ENCODE measurements at regions of chr18 and their contacts with region 1.

Region 1: DNA sequence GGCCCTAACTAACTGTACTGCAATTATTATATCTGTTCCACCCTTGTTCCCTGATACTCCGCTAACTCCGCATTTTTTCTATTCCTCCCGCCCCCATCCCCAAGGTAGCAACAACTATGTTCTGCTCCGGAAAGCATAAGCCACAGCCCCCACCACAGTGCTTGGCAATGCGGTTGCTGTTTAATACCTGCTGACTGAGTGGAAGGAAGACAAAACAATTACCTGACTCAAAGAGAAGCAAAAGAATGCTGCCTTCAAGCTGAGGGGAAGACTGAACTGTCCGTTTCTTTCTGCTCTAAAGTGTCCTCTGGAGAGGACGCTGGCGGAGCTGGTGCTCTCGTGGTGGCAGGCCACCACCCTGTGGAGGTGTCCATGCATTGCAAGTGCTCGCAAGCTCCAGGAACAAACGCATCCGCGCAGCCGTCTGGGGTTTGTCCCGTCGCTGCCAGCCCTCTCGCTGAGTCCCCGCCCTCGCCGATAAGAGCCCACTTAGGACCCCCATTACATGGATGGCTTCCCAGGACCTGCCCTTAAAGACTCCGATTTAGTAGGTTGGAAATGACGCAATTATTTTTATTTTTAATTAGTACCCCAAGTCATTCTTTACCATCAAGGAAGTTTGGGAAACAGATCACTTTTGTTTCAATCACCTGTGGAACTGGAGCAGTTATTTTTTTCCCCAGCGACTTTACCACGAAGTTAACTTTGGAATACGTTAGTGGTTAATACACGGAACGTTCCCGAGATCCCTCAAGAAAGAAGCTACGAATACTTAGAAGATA is 1.6 kb upstream of the MYL12A start:
- DNase-seq: peak; percentile 86
- ATAC-seq: peak; percentile 55
- H3K4me3 ChIP-seq: peak overlapping the region; percentile 91 to 99 (median 96)
- H3K4me3 Mint-ChIP-seq: peak overlapping the region; percentile 91
- H3K27ac ChIP-seq: peak overlapping the region; percentile 89 to 94
- H3K27ac Mint-ChIP-seq: peak overlapping the region; percentile 97
- H3K4me1 ChIP-seq: peaks cover 28 to 37% of the 10 kb centered on the region in 2 donors
- H3K4me1 Mint-ChIP-seq: peaks cover 37% of the 10 kb centered on the region
- H3K27me3 ChIP-seq: no peaks in the 10 kb centered on the region
- H3K27me3 Mint-ChIP-seq: no peaks in the 10 kb centered on the region
- CTCF ChIP-seq: peak; percentile 86

Region 2: DNA sequence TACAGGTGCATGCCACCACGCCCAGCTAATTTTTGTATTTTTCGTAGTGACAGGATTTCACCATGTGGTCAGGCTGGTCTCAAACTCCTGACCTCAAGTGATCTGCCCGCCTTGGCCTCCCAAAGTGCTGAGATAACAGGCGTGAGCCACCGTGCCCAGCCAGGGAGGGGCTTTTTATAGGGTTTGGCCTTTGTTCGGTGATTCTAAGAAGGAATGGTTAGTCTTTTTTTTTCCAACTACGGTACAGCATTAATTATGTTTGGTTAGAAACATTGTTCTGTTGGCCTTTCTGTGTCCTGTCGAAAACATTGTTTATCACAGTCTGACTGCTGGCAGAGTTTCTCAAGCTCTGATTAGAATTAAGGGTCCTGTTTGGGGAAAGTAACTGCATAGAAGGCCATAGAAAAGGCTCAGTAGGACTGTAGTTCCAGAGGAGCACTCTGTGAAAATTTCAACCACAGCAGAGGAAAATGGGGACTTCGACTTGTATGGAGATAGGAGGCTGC is 609.9 kb before region 1 on chr18:
- CTCF ChIA-PET with region 1: no interaction called
- POLR2A ChIA-PET with region 1: no interaction called
- intact Hi-C with region 1: loop called (anchors 5 kb)
- DNase-seq: no peak
- ATAC-seq: peak; percentile 11
- H3K4me3 ChIP-seq: peak overlapping the region; percentile 21 to 71 (median 29)
- H3K4me3 Mint-ChIP-seq: peak overlapping the region; percentile 85
- H3K27ac ChIP-seq: peak overlapping the region; percentile 96 to 99
- H3K27ac Mint-ChIP-seq: peak overlapping the region; percentile 99
- H3K4me1 ChIP-seq: peaks cover 67 to 79% of the 10 kb centered on the region in 2 donors
- H3K4me1 Mint-ChIP-seq: peaks cover 84% of the 10 kb centered on the region
- H3K27me3 ChIP-seq: no peaks in the 10 kb centered on the region
- H3K27me3 Mint-ChIP-seq: no peaks in the 10 kb centered on the region
- CTCF ChIP-seq: no peak

Region 3: DNA sequence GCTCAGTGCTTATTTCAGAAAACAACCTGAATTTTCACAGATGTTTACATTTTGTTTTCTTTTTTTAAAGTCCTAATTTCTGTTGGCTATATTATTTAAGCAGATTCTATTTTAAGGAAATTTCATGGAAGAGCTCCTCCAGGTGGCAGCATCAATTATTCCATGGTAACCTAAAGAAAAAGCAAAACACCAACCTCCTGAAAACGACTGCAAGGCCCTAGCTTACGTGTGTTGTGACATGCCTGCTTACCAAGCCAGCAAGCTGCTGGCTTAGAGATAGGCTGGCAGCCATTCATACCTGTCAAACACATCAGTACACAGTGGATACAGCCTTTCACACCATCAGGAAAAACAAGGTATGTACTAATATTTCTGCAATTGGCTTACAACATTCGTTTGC is 298.0 kb before region 1 on chr18:
- CTCF ChIA-PET with region 1: interaction called, 15 read pairs
- POLR2A ChIA-PET with region 1: no interaction called
- intact Hi-C with region 1: no loop called
- DNase-seq: no peak
- ATAC-seq: no peak
- H3K4me3 ChIP-seq: no peak overlapping the region
- H3K4me3 Mint-ChIP-seq: no peak overlapping the region
- H3K27ac ChIP-seq: no peak overlapping the region
- H3K27ac Mint-ChIP-seq: no peak overlapping the region
- H3K4me1 ChIP-seq: no peaks in the 10 kb centered on the region
- H3K4me1 Mint-ChIP-seq: no peaks in the 10 kb centered on the region
- H3K27me3 ChIP-seq: no peaks in the 10 kb centered on the region
- H3K27me3 Mint-ChIP-seq: no peaks in the 10 kb centered on the region
- CTCF ChIP-seq: no peak

Region 4: DNA sequence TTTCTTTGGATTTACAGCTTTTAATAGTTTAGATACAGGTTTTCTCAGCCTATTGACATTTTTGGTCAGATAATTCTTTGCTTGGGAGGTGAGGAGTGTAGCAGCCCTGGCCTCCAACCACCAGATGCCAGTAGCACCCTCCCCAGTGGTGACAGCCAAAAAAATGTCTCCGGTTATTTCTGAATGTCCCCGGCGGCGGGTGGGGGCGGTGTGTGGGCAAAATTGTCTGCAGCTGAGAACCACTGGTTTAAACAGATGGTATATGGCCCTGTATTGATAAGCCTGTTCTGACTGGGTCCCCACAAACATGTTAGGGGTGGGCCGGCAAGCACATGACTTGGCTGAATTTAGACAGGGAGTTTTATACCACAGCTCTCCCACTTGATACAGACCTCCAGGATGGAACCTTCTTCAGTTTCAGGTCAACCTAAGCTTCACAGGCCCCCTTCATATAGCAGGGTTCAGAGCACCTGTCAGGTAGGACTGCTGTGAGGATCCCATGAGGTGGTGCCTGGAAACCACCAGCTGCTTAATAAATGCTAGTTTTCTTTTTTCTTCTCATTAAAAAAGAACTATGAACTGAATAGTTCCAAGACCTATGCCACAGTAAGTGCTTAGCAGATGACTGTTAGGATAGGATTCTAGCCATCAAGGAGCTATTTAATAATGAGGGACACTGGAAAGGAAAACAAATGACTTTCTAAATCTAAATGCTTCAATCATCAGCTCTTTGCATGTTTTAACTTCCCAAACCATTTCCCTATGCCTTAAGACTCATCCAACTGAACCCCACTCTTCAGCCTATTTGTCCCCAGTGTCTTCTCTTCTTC is 251.2 kb before region 1 on chr18:
- CTCF ChIA-PET with region 1: interaction called, 155 read pairs
- POLR2A ChIA-PET with region 1: interaction called, 16 read pairs
- intact Hi-C with region 1: loop called (anchors 1 kb)
- DNase-seq: peak; percentile 81
- ATAC-seq: peak; percentile 95
- H3K4me3 ChIP-seq: peak overlapping the region in 3 of 5 experiments; percentile 12 to 38 (median 21)
- H3K4me3 Mint-ChIP-seq: peak overlapping the region; percentile 50
- H3K27ac ChIP-seq: peak overlapping the region in 1 of 2 donors; percentile 4
- H3K27ac Mint-ChIP-seq: peak overlapping the region; percentile 29
- H3K4me1 ChIP-seq: peaks cover 9 to 14% of the 10 kb centered on the region in 2 donors
- H3K4me1 Mint-ChIP-seq: peaks cover 35% of the 10 kb centered on the region
- H3K27me3 ChIP-seq: no peaks in the 10 kb centered on the region
- H3K27me3 Mint-ChIP-seq: no peaks in the 10 kb centered on the region
- CTCF ChIP-seq: peak; percentile 68

Region 5: DNA sequence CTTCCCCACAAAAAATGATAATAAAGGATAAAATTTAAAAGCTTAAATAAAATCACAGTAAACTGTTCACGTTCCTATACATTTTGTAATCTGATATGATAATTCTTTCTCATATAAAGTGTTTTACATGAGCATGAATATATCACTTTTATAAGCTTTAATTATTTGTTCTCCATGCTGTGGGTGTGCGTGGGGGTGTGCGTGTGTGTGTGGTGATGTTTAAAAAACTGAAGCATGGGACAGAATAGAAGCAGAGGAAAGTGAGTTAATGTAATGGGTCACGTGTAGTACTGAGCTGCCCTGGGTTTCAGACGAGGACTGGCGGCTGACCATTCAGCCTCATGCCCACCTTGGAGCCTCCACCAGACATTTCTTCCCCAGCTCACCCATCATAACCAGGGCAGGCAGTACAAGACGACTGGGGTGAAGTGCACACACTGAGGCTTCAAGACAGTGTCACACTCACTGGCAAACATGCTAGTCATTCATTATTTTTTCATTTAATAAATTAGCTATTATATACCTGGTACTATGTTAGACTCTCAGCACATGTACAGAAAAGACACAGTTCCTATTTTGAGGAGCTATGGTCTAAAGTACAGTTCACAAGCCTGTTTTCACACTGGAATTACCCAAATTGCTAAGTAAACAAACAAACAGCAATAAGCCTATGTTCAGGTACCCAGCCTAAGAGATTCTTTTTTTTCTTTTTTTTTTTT is 135.9 kb before region 1 on chr18:
- CTCF ChIA-PET with region 1: no interaction called
- POLR2A ChIA-PET with region 1: no interaction called
- intact Hi-C with region 1: no loop called
- DNase-seq: no peak
- ATAC-seq: no peak
- H3K4me3 ChIP-seq: no peak overlapping the region
- H3K4me3 Mint-ChIP-seq: no peak overlapping the region
- H3K27ac ChIP-seq: no peak overlapping the region
- H3K27ac Mint-ChIP-seq: no peak overlapping the region
- H3K4me1 ChIP-seq: no peaks in the 10 kb centered on the region
- H3K4me1 Mint-ChIP-seq: no peaks in the 10 kb centered on the region
- H3K27me3 ChIP-seq: no peaks in the 10 kb centered on the region
- H3K27me3 Mint-ChIP-seq: no peaks in the 10 kb centered on the region
- CTCF ChIP-seq: no peak

Region 6: GRCh38 chr18:3151399-3152264 is 94.4 kb before region 1 on chr18:
- CTCF ChIA-PET with region 1: interaction called, 73 read pairs
- POLR2A ChIA-PET with region 1: interaction called, 7 read pairs
- intact Hi-C with region 1: loop called (anchors 1 kb)
- DNase-seq: peak; percentile 50
- ATAC-seq: peak; percentile 33
- H3K4me3 ChIP-seq: no peak overlapping the region
- H3K4me3 Mint-ChIP-seq: no peak overlapping the region
- H3K27ac ChIP-seq: no peak overlapping the region
- H3K27ac Mint-ChIP-seq: no peak overlapping the region
- H3K4me1 ChIP-seq: no peaks in the 10 kb centered on the region
- H3K4me1 Mint-ChIP-seq: peaks cover 7% of the 10 kb centered on the region
- H3K27me3 ChIP-seq: no peaks in the 10 kb centered on the region
- H3K27me3 Mint-ChIP-seq: no peaks in the 10 kb centered on the region
- CTCF ChIP-seq: peak; percentile 95

Region 7: DNA sequence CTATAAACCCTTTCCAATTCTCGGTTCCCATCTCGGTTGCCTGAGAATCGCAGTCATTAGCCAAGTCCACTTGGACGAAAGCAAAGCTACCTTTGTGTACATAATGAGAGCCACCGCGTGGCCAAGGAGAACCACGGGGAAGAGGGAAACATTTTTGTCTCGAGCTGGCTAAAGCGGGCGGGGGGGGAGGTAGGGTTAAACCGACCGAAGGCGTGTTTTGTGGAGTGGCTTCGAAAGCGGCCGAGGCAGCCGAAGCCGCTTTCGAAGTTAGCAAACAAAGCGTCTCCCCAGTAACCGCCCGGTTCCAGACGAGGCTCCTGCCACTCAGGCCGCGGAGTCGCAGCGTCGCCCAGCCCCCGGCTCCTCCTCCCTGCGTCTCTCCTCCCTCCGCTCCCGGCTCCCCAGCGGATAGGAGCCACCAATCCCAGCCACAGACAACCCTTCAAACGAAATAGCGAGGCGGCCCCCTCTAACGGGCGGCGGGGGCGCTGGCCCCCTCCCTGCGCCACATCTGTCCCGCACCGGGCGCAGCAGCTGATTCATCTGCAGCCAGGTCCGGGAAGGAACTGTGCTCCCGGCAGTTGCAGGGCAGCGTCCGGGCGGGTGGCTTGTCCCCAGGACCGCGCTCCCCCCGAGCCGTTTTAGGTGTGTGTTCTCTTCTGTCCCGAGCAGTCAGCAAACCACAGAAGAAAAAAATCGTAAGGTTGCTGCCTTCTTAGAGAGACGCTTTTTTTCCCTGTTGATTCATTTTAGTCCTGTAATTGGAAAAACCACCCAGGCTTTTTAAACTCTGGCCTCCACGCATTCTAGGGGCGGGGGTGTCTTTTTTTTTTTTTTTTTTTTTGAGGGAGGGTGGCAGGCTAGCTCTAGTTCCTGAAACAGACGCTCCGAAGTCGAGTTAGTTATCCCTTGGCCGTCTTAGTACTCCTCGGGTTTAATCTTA is 202.1 kb after region 1 on chr18:
- CTCF ChIA-PET with region 1: interaction called, 3 read pairs
- POLR2A ChIA-PET with region 1: interaction called, 8 read pairs
- intact Hi-C with region 1: loop called (anchors 1 kb)
- DNase-seq: peak; percentile 94
- ATAC-seq: peak; percentile 47
- H3K4me3 ChIP-seq: peak overlapping the region; percentile 75 to 98 (median 92)
- H3K4me3 Mint-ChIP-seq: peak overlapping the region; percentile 99
- H3K27ac ChIP-seq: peak overlapping the region; percentile 99 to 100
- H3K27ac Mint-ChIP-seq: peak overlapping the region; percentile 96
- H3K4me1 ChIP-seq: peaks cover 9 to 42% of the 10 kb centered on the region in 2 donors
- H3K4me1 Mint-ChIP-seq: peaks cover 20% of the 10 kb centered on the region
- H3K27me3 ChIP-seq: no peaks in the 10 kb centered on the region
- H3K27me3 Mint-ChIP-seq: no peaks in the 10 kb centered on the region
- CTCF ChIP-seq: no peak

Region 8: DNA sequence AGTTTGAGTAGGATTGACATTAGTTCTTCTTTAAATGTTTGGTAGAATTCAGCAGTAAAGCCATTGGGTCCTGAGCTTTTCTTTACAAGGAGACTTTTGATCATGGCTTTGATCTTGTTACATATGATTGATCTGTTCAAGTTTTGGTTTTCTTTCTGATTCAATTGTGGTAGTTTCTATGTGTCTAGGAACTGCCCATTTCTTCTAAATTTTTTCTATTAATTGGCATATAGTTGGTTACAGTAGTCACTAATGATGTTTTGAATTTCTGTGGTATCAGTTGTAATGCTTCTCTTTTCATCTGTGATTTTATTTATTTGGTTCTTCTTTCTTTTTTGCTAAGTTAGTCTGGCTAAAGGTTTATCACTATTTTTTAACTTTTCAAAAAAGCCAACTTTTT is 1282.4 kb after region 1 on chr18:
- CTCF ChIA-PET with region 1: no interaction called
- POLR2A ChIA-PET with region 1: no interaction called
- intact Hi-C with region 1: no loop called
- DNase-seq: no peak
- ATAC-seq: no peak
- H3K4me3 ChIP-seq: no peak overlapping the region
- H3K4me3 Mint-ChIP-seq: no peak overlapping the region
- H3K27ac ChIP-seq: no peak overlapping the region
- H3K27ac Mint-ChIP-seq: no peak overlapping the region
- H3K4me1 ChIP-seq: no peaks in the 10 kb centered on the region
- H3K4me1 Mint-ChIP-seq: no peaks in the 10 kb centered on the region
- H3K27me3 ChIP-seq: no peaks in the 10 kb centered on the region
- H3K27me3 Mint-ChIP-seq: no peaks in the 10 kb centered on the region
- CTCF ChIP-seq: no peak

Measured in B cell (primary cell).